ENCODE measurements at regions of chr19 and their contacts with region 1.

Region 1: GRCh38 chr19:12796146-12797071 is 5.1 kb downstream of the JUNB start:
- DNase-seq: peak; percentile 82
- ATAC-seq: no peak
- H3K4me3 Mint-ChIP-seq: peak overlapping the region; percentile 51
- H3K27ac Mint-ChIP-seq: peak overlapping the region; percentile 81
- H3K4me1 Mint-ChIP-seq: peaks cover 35% of the 10 kb centered on the region
- H3K27me3 Mint-ChIP-seq: no peaks in the 10 kb centered on the region

Region 2: GRCh38 chr19:12716861-12717260 is 79.5 kb before region 1 on chr19:
- CTCF ChIA-PET with region 1: interaction called, 17 read pairs
- DNase-seq: peak; percentile 60
- ATAC-seq: peak; percentile 60
- H3K4me3 Mint-ChIP-seq: no peak overlapping the region
- H3K27ac Mint-ChIP-seq: no peak overlapping the region
- H3K4me1 Mint-ChIP-seq: peaks cover 28% of the 10 kb centered on the region
- H3K27me3 Mint-ChIP-seq: no peaks in the 10 kb centered on the region

Region 3: GRCh38 chr19:12806239-12807081 is 10.1 kb after region 1 on chr19 and contains the start of gene RNASEH2A:
- CTCF ChIA-PET with region 1: interaction called, 24 read pairs
- DNase-seq: peak; percentile 93
- ATAC-seq: peak; percentile 89
- H3K4me3 Mint-ChIP-seq: peak within 1 kb of the TSS; percentile 89
- H3K27ac Mint-ChIP-seq: peak within 1 kb of the TSS; percentile 82
- H3K4me1 Mint-ChIP-seq: peaks cover 26% of the 10 kb centered on the region
- H3K27me3 Mint-ChIP-seq: no peaks in the 10 kb centered on the region
- total RNA-seq, gene RNASEH2A: 53.4 to 58.8 TPM

Region 4: DNA sequence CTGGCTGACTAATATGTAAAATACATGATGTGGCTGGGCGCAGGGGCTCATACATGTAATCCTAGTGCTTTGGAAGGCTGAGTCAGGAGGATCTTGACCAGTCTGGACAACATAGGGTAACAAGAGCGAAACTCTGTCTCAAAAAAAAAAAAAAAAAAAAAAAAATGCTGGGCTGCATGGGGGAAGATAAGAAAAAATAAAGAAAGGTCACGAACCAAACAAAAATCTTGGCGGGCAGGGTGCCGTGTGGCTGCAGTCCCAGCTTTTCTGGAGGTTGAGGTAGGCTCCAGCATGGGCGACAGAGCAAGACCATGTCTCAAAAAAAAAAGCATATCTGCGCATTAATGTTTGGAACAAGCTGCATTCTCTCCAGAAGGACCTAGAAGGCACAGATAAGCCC is 18.7 kb after region 1 on chr19:
- CTCF ChIA-PET with region 1: interaction called, 10 read pairs
- DNase-seq: no peak
- ATAC-seq: no peak
- H3K4me3 Mint-ChIP-seq: no peak overlapping the region
- H3K27ac Mint-ChIP-seq: no peak overlapping the region
- H3K4me1 Mint-ChIP-seq: no peaks in the 10 kb centered on the region
- H3K27me3 Mint-ChIP-seq: no peaks in the 10 kb centered on the region

Region 5: DNA sequence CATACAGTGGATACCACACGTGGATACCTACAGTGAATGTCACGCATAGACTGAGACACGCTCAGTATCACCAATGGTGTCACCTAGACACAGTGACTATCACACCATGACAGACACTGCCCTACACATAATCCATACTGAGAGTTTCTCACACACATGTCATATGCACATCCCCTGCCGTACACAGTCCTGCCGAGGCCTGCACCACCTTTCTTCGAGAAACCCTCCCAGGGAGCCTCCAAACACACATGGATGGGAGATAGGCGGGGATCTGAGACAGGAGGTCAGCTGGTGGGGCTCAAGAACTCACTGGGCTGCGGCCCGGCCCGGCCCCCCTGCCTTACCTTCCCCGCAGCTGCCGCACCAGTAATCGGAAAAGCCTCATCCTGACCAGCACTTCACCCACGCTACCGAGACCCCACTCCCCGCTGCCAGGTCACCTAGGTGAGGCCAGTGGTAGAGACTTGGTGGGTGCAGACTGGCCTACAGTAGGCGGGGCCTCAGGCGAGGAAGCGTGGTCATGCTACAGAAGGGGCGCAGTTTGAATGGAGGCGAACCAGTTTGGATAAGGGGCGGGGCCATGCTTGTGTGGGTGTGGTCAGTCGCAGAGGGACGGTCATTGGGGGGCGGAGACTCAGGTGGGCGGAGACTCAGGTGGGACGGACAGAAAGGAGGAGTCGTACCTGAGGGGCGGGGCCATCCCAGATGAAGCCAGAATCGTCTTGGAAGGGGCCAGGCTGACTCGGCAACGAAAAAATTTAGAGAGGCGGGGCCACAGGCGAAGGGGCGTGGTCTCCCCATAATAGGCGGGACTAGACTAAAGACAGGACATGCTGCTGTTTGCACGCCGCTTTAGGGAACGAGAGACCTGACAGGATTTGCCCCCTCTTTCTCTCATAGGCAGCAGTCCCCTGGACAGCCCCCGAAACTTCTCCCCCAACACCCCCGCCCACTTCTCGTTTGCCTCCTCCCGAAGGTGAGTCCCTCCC is 44.0 kb after region 1 on chr19:
- CTCF ChIA-PET with region 1: no interaction called
- DNase-seq: peak; percentile 76
- ATAC-seq: peak; percentile 68
- H3K4me3 Mint-ChIP-seq: no peak overlapping the region
- H3K27ac Mint-ChIP-seq: no peak overlapping the region
- H3K4me1 Mint-ChIP-seq: peaks cover 16% of the 10 kb centered on the region
- H3K27me3 Mint-ChIP-seq: peaks cover 69% of the 10 kb centered on the region

Region 6: GRCh38 chr19:13012690-13013608 is 216.5 kb after region 1 on chr19:
- CTCF ChIA-PET with region 1: no interaction called
- DNase-seq: peak; percentile 51
- ATAC-seq: peak; percentile 33
- H3K4me3 Mint-ChIP-seq: peak overlapping the region; percentile 38
- H3K27ac Mint-ChIP-seq: peak overlapping the region; percentile 58
- H3K4me1 Mint-ChIP-seq: peaks cover 11% of the 10 kb centered on the region
- H3K27me3 Mint-ChIP-seq: peaks cover 84% of the 10 kb centered on the region